ENCODE measurements at regions of chr1 and their contacts with region 1.

Region 1: DNA sequence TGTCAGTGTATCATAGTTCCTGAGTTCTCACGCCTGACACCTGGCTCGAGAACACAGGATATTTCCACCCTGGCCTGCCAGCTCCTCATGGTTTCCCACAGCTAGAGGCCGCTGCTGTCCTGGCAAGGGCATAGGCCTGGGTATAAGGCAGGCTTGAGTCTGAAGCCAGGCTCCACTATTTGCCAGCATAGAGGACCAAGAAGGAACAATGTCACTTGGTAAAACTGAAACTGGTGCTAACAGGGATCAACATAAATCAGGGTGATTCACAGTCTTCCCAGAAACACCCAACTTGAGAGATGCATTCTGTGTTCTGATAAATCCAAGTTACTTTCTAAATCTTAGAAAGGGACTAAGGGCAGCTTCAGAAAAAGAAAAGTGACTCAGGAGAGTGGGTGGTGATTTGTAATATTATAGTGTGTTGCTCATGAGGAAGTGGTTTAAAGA is 6.9 kb upstream of the S100A2 start:
- DNase-seq: peak; percentile 79 to 80 (median 79)
- H3K4me3 ChIP-seq: peak overlapping the region in 1 of 7 experiments; percentile 18
- H3K27ac ChIP-seq: no peak overlapping the region
- H3K4me1 ChIP-seq: peaks cover 7 to 33% (median 23%) of the 10 kb centered on the region in 4 experiments
- H3K27me3 ChIP-seq: peaks cover 0 to 1% (median 0%) of the 10 kb centered on the region in 5 experiments

Region 2: GRCh38 chr1:153150846-153151245 is 421.7 kb before region 1 on chr1 and contains the start of gene SPRR2G:
- CTCF ChIA-PET with region 1: no interaction called
- POLR2A ChIA-PET with region 1: no interaction called
- DNase-seq: no peak
- H3K4me3 ChIP-seq: no peak within 1 kb of the TSS
- H3K27ac ChIP-seq: no peak within 1 kb of the TSS
- H3K4me1 ChIP-seq: no peaks in the 10 kb centered on the region
- H3K27me3 ChIP-seq: peaks cover 2 to 15% (median 6%) of the 10 kb centered on the region in 5 experiments

Region 3: GRCh38 chr1:153520230-153520629 is 52.4 kb before region 1 on chr1:
- CTCF ChIA-PET with region 1: interaction called, 22 read pairs
- POLR2A ChIA-PET with region 1: no interaction called
- DNase-seq: no peak
- H3K4me3 ChIP-seq: no peak overlapping the region
- H3K27ac ChIP-seq: no peak overlapping the region
- H3K4me1 ChIP-seq: peaks cover 0 to 30% (median 16%) of the 10 kb centered on the region in 4 experiments
- H3K27me3 ChIP-seq: no peaks in the 10 kb centered on the region

Region 4: DNA sequence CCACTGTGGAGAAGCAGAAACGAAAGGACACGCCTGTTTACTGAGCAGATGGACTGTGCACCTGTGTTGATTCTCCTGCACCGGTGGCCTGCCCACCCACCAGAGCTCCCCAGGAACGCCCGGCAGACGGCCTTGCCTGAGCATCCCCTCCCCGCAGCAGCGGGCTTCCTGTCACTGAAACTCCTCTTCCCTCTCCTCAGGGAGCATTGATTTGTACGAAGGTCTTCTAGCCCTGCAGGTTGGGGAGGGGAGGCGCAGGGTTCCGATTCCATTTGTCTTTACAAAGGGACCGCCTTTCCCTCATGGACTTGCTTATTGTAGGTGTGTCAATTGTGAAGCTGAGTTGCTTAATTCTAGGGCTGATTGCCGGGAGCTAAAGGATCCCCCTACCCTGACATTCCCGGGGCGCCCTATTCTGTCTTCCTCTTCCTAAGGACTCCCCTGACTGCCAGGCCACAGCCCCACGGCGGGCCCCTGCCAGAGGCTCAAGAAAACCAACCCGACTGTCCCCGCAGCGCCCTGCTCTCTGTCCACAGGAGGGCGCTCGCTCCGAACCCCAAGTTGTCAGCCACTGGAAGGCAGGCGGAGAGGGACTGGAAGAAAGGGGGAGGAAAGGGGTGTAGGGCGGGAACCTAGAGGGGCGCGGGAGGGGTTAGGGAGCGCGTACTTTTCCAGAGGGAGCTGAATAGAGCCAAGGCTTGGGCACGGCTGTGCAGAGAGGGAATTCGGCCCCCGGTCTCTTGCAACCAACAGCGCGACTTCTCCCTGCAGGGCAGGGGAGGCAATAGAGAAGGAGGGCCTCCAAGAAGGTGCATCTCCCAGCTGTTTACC is 39.6 kb before region 1 on chr1:
- CTCF ChIA-PET with region 1: interaction called, 169 read pairs
- POLR2A ChIA-PET with region 1: interaction called, 6 read pairs
- DNase-seq: peak; percentile 79 to 84 (median 82)
- H3K4me3 ChIP-seq: peak overlapping the region in 2 of 7 experiments; percentile 30 to 46
- H3K27ac ChIP-seq: no peak overlapping the region
- H3K4me1 ChIP-seq: peaks cover 8 to 53% (median 43%) of the 10 kb centered on the region in 4 experiments
- H3K27me3 ChIP-seq: no peaks in the 10 kb centered on the region

Region 5: GRCh38 chr1:153587314-153587713 is 14.7 kb after region 1 on chr1:
- CTCF ChIA-PET with region 1: interaction called, 11 read pairs
- POLR2A ChIA-PET with region 1: no interaction called
- DNase-seq: no peak
- H3K4me3 ChIP-seq: no peak overlapping the region
- H3K27ac ChIP-seq: no peak overlapping the region
- H3K4me1 ChIP-seq: no peaks in the 10 kb centered on the region
- H3K27me3 ChIP-seq: no peaks in the 10 kb centered on the region

Region 6: GRCh38 chr1:153598309-153599172 is 25.9 kb after region 1 on chr1:
- CTCF ChIA-PET with region 1: interaction called, 14 read pairs
- POLR2A ChIA-PET with region 1: interaction called, 3 read pairs
- DNase-seq: peak; percentile 88 to 99 (median 97)
- H3K4me3 ChIP-seq: peak overlapping the region in 4 of 7 experiments; percentile 2 to 48 (median 32)
- H3K27ac ChIP-seq: peak overlapping the region; percentile 94
- H3K4me1 ChIP-seq: peaks cover 0 to 40% (median 17%) of the 10 kb centered on the region in 4 experiments
- H3K27me3 ChIP-seq: no peaks in the 10 kb centered on the region